ENCODE measurements at regions of chr16 and their contacts with region 1.

Region 1: DNA sequence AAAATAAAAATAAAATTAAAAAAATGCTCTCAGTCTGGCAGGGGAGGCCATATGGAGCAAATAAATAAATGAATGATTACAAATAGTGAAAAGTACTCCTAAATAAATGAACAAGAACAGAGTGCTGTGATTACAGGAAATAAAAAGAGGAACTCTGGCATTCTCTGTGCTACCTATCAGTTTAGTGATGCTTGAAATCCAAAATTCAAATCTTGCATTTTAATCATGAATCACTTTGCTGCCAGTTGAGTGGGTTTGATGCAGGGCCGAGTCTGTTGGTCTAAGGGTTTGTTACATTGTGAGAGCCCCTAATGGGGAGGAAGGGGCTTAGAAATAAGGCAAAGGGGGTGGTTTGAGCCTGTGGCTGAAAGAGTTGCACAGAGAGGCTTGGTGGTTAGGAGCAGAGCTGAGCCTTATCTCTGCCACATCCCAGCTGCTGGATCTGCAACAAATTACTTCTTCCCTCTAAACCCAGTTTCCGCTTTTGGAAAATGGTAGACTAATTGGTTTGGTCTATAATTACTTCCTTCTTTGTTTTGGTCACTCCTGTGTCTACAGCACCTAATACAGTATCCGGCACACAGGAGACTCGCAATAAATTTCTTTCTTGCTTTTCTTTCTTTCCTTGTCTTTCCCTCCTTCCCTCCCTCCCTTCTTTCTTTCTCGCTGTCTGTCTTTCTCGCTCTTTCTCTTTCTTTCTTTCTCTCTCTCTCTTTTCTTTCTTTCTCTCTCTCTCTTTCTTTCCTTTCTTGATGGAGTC is 6.3 kb upstream of the ABCC1 start:
- DNase-seq: peak; percentile 58
- ATAC-seq: peak; percentile 78
- H3K4me3 ChIP-seq: peak overlapping the region in 1 of 5 experiments; percentile 6
- H3K4me3 Mint-ChIP-seq: peak overlapping the region; percentile 65
- H3K27ac ChIP-seq: peak overlapping the region; percentile 34 to 64
- H3K27ac Mint-ChIP-seq: peak overlapping the region; percentile 87
- H3K4me1 ChIP-seq: peaks cover 17 to 25% of the 10 kb centered on the region in 2 donors
- H3K4me1 Mint-ChIP-seq: peaks cover 20% of the 10 kb centered on the region
- H3K27me3 ChIP-seq: no peaks in the 10 kb centered on the region
- H3K27me3 Mint-ChIP-seq: no peaks in the 10 kb centered on the region
- CTCF ChIP-seq: no peak

Region 2: GRCh38 chr16:15961060-15961511 is 18.0 kb after region 1 on chr16:
- CTCF ChIA-PET with region 1: interaction called, 4 read pairs
- POLR2A ChIA-PET with region 1: interaction called, 3 read pairs
- intact Hi-C with region 1: loop called (anchors 2 kb)
- DNase-seq: peak; percentile 72
- ATAC-seq: peak; percentile 85
- H3K4me3 ChIP-seq: peak overlapping the region in 2 of 5 experiments; percentile 15 to 25
- H3K4me3 Mint-ChIP-seq: peak overlapping the region; percentile 66
- H3K27ac ChIP-seq: peak overlapping the region; percentile 12 to 76
- H3K27ac Mint-ChIP-seq: peak overlapping the region; percentile 84
- H3K4me1 ChIP-seq: peaks cover 20 to 25% of the 10 kb centered on the region in 2 donors
- H3K4me1 Mint-ChIP-seq: peaks cover 41% of the 10 kb centered on the region
- H3K27me3 ChIP-seq: no peaks in the 10 kb centered on the region
- H3K27me3 Mint-ChIP-seq: no peaks in the 10 kb centered on the region
- CTCF ChIP-seq: no peak